Naive thymus-derived CD8-positive, alpha-beta T cell (primary cell): ENCODE measurements at regions of chr1 and their contacts with region 1.

Region 1: GRCh38 chr1:151281969-151282882 is at the start of gene ZNF687:
- DNase-seq: peak; percentile 94 to 100 (median 98)
- ATAC-seq: peak; percentile 89 to 90
- H3K4me3 Mint-ChIP-seq: peak within 1 kb of the TSS; percentile 89 to 100 (median 97)
- H3K27ac Mint-ChIP-seq: peak within 1 kb of the TSS; percentile 93 to 99 (median 98)
- H3K4me1 Mint-ChIP-seq: peaks cover 17 to 42% (median 29%) of the 10 kb centered on the region in 4 donors
- H3K27me3 Mint-ChIP-seq: no peaks in the 10 kb centered on the region
- polyA plus RNA-seq, gene ZNF687: 0.56 to 1.1 (median 0.96) TPM

Region 2: GRCh38 chr1:151175910-151176309 is 106.3 kb before region 1 on chr1 and contains the start of gene TMOD4:
- POLR2A ChIA-PET with region 1: no interaction called
- DNase-seq: no peak
- ATAC-seq: peak; percentile 73 to 78
- H3K4me3 Mint-ChIP-seq: no peak within 1 kb of the TSS
- H3K27ac Mint-ChIP-seq: peak within 1 kb of the TSS in 9 of 10 donors; percentile 8 to 80 (median 57)
- H3K4me1 Mint-ChIP-seq: peaks cover 0 to 14% (median 7%) of the 10 kb centered on the region in 4 donors
- H3K27me3 Mint-ChIP-seq: no peaks in the 10 kb centered on the region
- polyA plus RNA-seq, gene TMOD4: 0.50 to 0.59 TPM in 2 of 3 donors, not detected in the other

Region 3: DNA sequence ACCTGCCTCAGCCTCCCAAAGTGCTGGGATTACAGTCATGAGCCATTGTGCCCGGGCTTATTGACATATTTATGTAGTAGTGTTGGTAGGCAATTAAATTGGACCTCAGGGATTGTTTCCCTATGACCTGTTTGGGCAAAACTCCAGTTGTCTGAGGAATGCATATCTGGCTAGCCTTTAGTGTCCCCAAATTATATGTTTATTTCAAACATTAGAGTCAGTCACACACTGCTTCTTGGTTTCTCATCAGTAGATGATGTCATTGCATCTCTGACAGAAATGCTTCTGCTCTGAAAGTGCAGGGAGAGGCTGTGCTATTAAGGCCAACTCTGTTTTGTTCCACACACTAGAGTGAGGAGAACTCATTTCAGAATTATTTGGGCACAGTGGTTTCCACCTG is 71.4 kb before region 1 on chr1:
- POLR2A ChIA-PET with region 1: no interaction called
- DNase-seq: no peak
- ATAC-seq: no peak
- H3K4me3 Mint-ChIP-seq: peak overlapping the region in 1 of 10 donors; percentile 15
- H3K27ac Mint-ChIP-seq: peak overlapping the region in 3 of 10 donors; percentile 5 to 92 (median 11)
- H3K4me1 Mint-ChIP-seq: peaks cover 6 to 39% (median 19%) of the 10 kb centered on the region in 4 donors
- H3K27me3 Mint-ChIP-seq: no peaks in the 10 kb centered on the region

Region 4: GRCh38 chr1:151235235-151235634 is 47.0 kb before region 1 on chr1:
- POLR2A ChIA-PET with region 1: no interaction called
- DNase-seq: no peak
- ATAC-seq: no peak
- H3K4me3 Mint-ChIP-seq: no peak overlapping the region
- H3K27ac Mint-ChIP-seq: peak overlapping the region in 3 of 10 donors; percentile 9 to 29 (median 20)
- H3K4me1 Mint-ChIP-seq: peaks cover 0 to 8% (median 2%) of the 10 kb centered on the region in 4 donors
- H3K27me3 Mint-ChIP-seq: no peaks in the 10 kb centered on the region

Region 5: GRCh38 chr1:151254217-151255213 is 27.7 kb before region 1 on chr1 and contains the start of gene PSMD4:
- POLR2A ChIA-PET with region 1: interaction called, 12 read pairs
- DNase-seq: peak; percentile 78 to 97 (median 92)
- ATAC-seq: peak; percentile 95
- H3K4me3 Mint-ChIP-seq: peak within 1 kb of the TSS; percentile 87 to 99 (median 96)
- H3K27ac Mint-ChIP-seq: peak within 1 kb of the TSS; percentile 93 to 100 (median 96)
- H3K4me1 Mint-ChIP-seq: peaks cover 22 to 41% (median 39%) of the 10 kb centered on the region in 4 donors
- H3K27me3 Mint-ChIP-seq: peaks cover 0 to 2% (median 0%) of the 10 kb centered on the region in 5 donors
- polyA plus RNA-seq, gene PSMD4: 220 to 239 (median 228) TPM

Region 6: DNA sequence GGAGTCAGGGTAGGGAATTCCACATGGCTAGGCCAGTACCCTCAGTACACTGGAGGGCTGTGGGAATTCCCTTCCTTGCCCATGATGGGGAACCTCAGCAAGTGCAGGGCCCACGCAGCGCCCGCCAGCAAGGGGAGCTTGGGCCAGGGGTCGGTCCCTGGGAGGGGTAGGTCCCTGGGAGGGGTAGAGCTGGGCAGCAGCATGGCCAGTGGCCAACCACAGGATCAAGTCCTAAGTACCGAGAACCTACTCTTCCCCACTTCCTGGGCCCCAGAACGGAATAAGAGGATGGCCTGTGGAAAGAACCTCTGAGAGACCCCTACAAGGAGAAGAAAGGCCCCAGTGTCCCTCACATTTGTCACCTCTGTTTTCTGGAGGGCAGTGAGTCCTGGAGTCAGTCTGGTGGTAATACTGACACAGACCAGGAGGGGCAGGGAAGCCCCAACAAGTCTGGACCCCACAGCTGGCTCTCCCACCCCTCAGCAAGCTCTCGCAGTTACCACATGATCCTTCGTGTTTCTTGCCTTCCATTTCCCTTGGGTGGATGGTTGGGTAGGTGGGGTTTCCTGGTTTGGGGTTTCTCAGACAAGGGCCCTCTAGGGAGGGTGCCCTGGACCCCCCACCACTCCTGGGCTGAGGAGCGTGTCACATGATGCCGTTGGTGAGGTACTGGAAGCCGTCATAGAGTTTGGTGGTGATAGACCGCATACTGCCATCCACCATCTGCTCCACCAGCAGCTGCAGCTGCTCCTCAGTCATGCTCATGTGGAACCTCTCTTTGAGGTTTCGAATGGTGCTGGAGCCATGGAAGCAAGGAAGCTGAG is 10.2 kb after region 1 on chr1:
- POLR2A ChIA-PET with region 1: interaction called, 10 read pairs
- DNase-seq: peak in 2 of 10 donors; percentile 29 to 50
- ATAC-seq: peak; percentile 28 to 65
- H3K4me3 Mint-ChIP-seq: peak overlapping the region in 1 of 10 donors; percentile 19
- H3K27ac Mint-ChIP-seq: peak overlapping the region in 9 of 10 donors; percentile 28 to 93 (median 73)
- H3K4me1 Mint-ChIP-seq: peaks cover 16 to 37% (median 27%) of the 10 kb centered on the region in 4 donors
- H3K27me3 Mint-ChIP-seq: no peaks in the 10 kb centered on the region

Region 7: GRCh38 chr1:151309811-151310323 is 27.6 kb after region 1 on chr1:
- POLR2A ChIA-PET with region 1: no interaction called
- DNase-seq: no peak
- ATAC-seq: no peak
- H3K4me3 Mint-ChIP-seq: no peak overlapping the region
- H3K27ac Mint-ChIP-seq: peak overlapping the region in 5 of 10 donors; percentile 36 to 84 (median 58)
- H3K4me1 Mint-ChIP-seq: peaks cover 21 to 44% (median 40%) of the 10 kb centered on the region in 4 donors
- H3K27me3 Mint-ChIP-seq: no peaks in the 10 kb centered on the region

Region 8: GRCh38 chr1:151327223-151327902 is 45.1 kb after region 1 on chr1 and contains the start of gene PI4KB:
- POLR2A ChIA-PET with region 1: interaction called, 17 read pairs
- DNase-seq: peak; percentile 72 to 98 (median 90)
- ATAC-seq: peak; percentile 91 to 95
- H3K4me3 Mint-ChIP-seq: peak within 1 kb of the TSS; percentile 93 to 99 (median 97)
- H3K27ac Mint-ChIP-seq: peak within 1 kb of the TSS; percentile 94 to 100 (median 98)
- H3K4me1 Mint-ChIP-seq: peaks cover 24 to 47% (median 45%) of the 10 kb centered on the region in 4 donors
- H3K27me3 Mint-ChIP-seq: no peaks in the 10 kb centered on the region
- polyA plus RNA-seq, gene PI4KB: 42.4 to 63.3 (median 52.3) TPM

Region 9: DNA sequence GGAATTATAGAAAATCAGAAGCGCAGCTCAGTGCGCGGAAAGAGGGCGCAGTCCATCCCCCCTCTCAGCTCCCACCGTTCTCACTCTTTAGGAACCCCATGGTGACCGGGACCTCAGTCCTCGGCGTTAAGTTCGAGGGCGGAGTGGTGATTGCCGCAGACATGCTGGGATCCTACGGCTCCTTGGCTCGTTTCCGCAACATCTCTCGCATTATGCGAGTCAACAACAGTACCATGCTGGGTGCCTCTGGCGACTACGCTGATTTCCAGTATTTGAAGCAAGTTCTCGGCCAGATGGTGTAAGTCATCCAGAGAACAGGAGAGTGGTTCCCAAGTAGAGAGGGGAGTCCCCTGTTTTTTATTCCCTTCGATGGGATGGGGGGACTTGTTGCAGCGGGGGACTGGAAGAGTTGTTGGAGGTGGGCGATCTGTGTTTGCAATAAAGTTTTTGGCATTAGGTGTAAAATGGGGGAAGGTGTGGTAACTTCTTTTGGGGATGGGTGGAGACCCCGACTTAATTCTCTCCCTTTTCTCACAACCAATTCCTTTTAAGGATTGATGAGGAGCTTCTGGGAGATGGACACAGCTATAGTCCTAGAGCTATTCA is 117.8 kb after region 1 on chr1:
- POLR2A ChIA-PET with region 1: interaction called, 12 read pairs
- DNase-seq: peak in 1 of 10 donors; percentile 4
- ATAC-seq: peak; percentile 8 to 14
- H3K4me3 Mint-ChIP-seq: peak overlapping the region; percentile 87 to 99 (median 94)
- H3K27ac Mint-ChIP-seq: peak overlapping the region; percentile 92 to 100 (median 98)
- H3K4me1 Mint-ChIP-seq: peaks cover 15 to 27% (median 25%) of the 10 kb centered on the region in 4 donors
- H3K27me3 Mint-ChIP-seq: no peaks in the 10 kb centered on the region